ENCODE measurements at regions of chr21 and their contacts with region 1.

Region 1: GRCh38 chr21:38733973-38734546 is 71.7 kb upstream of the ETS2 start:
- DNase-seq: peak; percentile 55 to 96
- H3K4me3 ChIP-seq: peak overlapping the region; percentile 36 to 56
- H3K27ac ChIP-seq: peak overlapping the region; percentile 78 to 81
- H3K4me1 ChIP-seq: peaks cover 0 to 20% of the 10 kb centered on the region in 2 donors
- H3K27me3 ChIP-seq: no peaks in the 10 kb centered on the region
- CTCF ChIP-seq: peak; percentile 84 to 92 (median 92)

Region 2: GRCh38 chr21:38773099-38774061 is 39.3 kb after region 1 on chr21:
- intact Hi-C with region 1: loop called (anchors 2 kb)
- DNase-seq: peak; percentile 43 to 92
- H3K4me3 ChIP-seq: no peak overlapping the region
- H3K27ac ChIP-seq: peak overlapping the region; percentile 37 to 75
- H3K4me1 ChIP-seq: peaks cover 4 to 18% of the 10 kb centered on the region in 2 donors
- H3K27me3 ChIP-seq: no peaks in the 10 kb centered on the region
- CTCF ChIP-seq: no peak

Region 3: GRCh38 chr21:38925923-38926322 is 191.9 kb after region 1 on chr21:
- intact Hi-C with region 1: loop called (anchors 10 kb)
- DNase-seq: peak; percentile 42 to 88
- H3K4me3 ChIP-seq: peak overlapping the region; percentile 49 to 54
- H3K27ac ChIP-seq: peak overlapping the region; percentile 93 to 94
- H3K4me1 ChIP-seq: peaks cover 8 to 35% of the 10 kb centered on the region in 2 donors
- H3K27me3 ChIP-seq: no peaks in the 10 kb centered on the region
- CTCF ChIP-seq: no peak

Region 4: DNA sequence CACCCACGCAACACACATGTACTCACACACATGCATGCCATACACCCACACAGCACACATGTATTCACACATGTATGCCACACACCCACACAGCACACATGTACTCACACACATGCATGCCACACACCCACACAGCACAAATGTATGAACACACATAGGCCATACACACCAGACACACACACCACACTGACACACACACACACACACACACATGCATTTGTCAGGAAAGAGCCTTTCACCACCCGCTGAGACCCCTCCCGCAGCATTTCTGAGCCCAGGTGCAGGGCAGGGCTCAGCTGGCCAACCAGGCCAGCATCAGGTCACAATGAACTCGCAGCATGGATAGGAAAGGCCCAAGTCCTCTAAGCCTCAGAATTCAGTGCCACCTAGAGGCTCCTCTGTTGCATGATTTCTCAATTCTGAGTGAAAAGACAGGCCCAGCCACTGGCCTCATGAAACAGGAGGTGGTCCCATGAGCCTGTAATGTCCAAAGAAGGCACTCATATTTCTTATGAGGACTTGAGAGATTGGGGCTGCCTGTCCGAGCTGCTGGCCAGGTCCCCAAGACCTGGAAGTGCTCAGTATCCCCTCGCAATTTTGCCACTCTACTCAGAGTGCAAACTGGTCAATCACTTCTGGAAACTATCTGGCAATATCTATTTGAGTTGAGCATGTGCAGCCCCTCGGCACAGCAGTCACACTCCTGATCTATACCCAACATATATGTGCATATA is 391.9 kb after region 1 on chr21:
- intact Hi-C with region 1: loop called (anchors 1 kb)
- DNase-seq: peak in 1 of 2 donors; percentile 84
- H3K4me3 ChIP-seq: no peak overlapping the region
- H3K27ac ChIP-seq: peak overlapping the region in 1 of 2 donors; percentile 81
- H3K4me1 ChIP-seq: no peaks in the 10 kb centered on the region
- H3K27me3 ChIP-seq: no peaks in the 10 kb centered on the region
- CTCF ChIP-seq: peak; percentile 54 to 79 (median 76)